IMR-90 (cell line): ENCODE measurements at regions of chr5 and their contacts with region 1.

Region 1: GRCh38 chr5:42756606-42757601 is at the start of gene CCDC152:
- DNase-seq: peak; percentile 3
- ATAC-seq: peak; percentile 88
- H3K4me3 ChIP-seq: peak within 1 kb of the TSS; percentile 33
- H3K27ac ChIP-seq: no peak within 1 kb of the TSS
- H3K4me1 ChIP-seq: no peaks in the 10 kb centered on the region
- H3K27me3 ChIP-seq: no peaks in the 10 kb centered on the region
- CTCF ChIP-seq: no peak
- POLR2A ChIP-seq: no peak
- RAD21 ChIP-seq: no peak
- total RNA-seq, gene CCDC152: 0.90 and 1.9 TPM in 2 replicates

Region 2: GRCh38 chr5:41695920-41696582 is 1060.9 kb before region 1 on chr5:
- CTCF ChIA-PET with region 1: no interaction called
- POLR2A ChIA-PET with region 1: no interaction called
- dilution Hi-C with region 1: no loop called
- in situ Hi-C with region 1: no loop called
- intact Hi-C with region 1: no loop called
- DNase-seq: no peak
- ATAC-seq: peak; percentile 53
- H3K4me3 ChIP-seq: no peak overlapping the region
- H3K27ac ChIP-seq: no peak overlapping the region
- H3K4me1 ChIP-seq: no peaks in the 10 kb centered on the region
- H3K27me3 ChIP-seq: peaks cover 2% of the 10 kb centered on the region
- CTCF ChIP-seq: peak; percentile 35
- POLR2A ChIP-seq: no peak
- RAD21 ChIP-seq: peak; percentile 44

Region 3: DNA sequence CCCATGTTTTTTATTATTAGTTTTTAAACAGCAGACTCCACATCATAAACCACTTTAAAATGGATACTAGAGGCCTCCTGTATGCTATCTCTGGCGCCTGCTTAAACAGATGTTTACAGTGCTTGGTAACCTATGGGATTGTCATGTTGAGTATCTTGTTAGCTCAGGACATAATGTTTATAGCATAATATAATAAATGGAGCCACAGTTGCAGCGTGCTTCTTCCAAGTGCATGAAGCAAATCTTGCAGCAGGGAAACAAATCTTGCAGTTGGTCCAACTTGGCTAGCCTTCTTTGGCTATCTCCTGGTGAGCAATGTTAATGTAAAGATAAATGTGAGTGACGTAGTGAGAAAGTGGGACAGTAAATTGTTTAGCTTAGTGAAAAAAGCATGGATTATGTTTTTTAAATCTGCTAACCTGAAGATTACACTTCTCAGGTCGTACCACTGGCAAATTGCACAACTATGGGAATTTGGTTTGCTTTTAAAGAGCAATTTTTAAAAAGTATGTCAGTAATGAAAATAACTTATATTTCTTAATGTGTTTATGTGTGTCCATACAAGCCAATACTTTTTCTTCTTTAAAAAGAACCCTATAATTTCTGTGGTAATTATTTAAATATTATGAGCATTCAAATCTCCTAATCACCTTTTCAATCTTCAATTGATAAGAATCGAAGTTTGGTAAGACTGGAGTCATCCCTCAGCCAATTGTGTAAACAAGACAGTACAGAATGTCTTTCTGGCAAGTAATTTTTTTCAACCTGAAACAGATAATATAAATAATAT is 330.7 kb before region 1 on chr5:
- CTCF ChIA-PET with region 1: no interaction called
- POLR2A ChIA-PET with region 1: no interaction called
- dilution Hi-C with region 1: no loop called
- in situ Hi-C with region 1: no loop called
- intact Hi-C with region 1: no loop called
- DNase-seq: no peak
- ATAC-seq: no peak
- H3K4me3 ChIP-seq: no peak overlapping the region
- H3K27ac ChIP-seq: no peak overlapping the region
- H3K4me1 ChIP-seq: no peaks in the 10 kb centered on the region
- H3K27me3 ChIP-seq: no peaks in the 10 kb centered on the region
- CTCF ChIP-seq: no peak
- POLR2A ChIP-seq: no peak
- RAD21 ChIP-seq: no peak

Region 4: GRCh38 chr5:42636425-42636824 is 120.5 kb before region 1 on chr5:
- CTCF ChIA-PET with region 1: no interaction called
- POLR2A ChIA-PET with region 1: no interaction called
- dilution Hi-C with region 1: no loop called
- in situ Hi-C with region 1: no loop called
- intact Hi-C with region 1: no loop called
- DNase-seq: no peak
- ATAC-seq: no peak
- H3K4me3 ChIP-seq: no peak overlapping the region
- H3K27ac ChIP-seq: no peak overlapping the region
- H3K4me1 ChIP-seq: no peaks in the 10 kb centered on the region
- H3K27me3 ChIP-seq: no peaks in the 10 kb centered on the region
- CTCF ChIP-seq: no peak
- POLR2A ChIP-seq: no peak
- RAD21 ChIP-seq: no peak

Region 5: DNA sequence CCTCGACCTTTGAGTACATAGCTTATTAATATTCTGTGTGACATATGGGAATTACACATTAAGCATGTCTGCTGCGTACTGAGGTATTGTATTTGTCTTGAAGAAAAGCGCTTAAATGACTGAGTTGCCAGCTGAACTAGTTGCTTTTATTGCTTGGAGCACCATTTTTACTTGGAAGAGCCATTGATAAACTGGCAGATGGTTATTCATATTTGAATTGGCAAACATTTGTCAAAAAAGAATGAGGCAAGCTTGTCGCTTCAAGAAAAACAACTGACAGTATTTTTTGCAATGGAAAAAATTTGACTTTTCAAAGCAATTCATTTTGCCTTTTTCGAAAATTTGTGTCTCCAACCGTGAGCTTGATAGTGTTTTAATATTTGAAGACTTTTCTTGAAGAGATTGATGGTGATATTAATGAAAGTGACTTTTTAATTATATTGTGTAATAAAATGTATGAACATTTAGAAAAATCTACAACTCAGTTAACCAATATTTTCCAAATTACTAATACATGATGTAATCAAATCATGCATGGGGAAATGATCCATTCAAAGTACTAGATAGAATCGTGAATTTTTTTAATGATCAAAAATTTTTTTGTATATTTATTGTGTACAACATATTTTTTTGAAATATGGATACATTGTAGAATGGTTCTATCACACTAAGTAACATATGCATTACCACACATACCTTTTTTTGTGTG is 55.4 kb before region 1 on chr5:
- CTCF ChIA-PET with region 1: no interaction called
- POLR2A ChIA-PET with region 1: no interaction called
- dilution Hi-C with region 1: no loop called
- in situ Hi-C with region 1: no loop called
- intact Hi-C with region 1: loop called (anchors 5 kb)
- DNase-seq: no peak
- ATAC-seq: no peak
- H3K4me3 ChIP-seq: no peak overlapping the region
- H3K27ac ChIP-seq: no peak overlapping the region
- H3K4me1 ChIP-seq: no peaks in the 10 kb centered on the region
- H3K27me3 ChIP-seq: no peaks in the 10 kb centered on the region
- CTCF ChIP-seq: no peak
- POLR2A ChIP-seq: no peak
- RAD21 ChIP-seq: no peak